Activated CD8-positive, alpha-beta T cell treated with anti-CD3 and anti-CD28 coated beads, Interleukin-2, amount 10 ng/mL, durations not matched to agents 7 days and 5 days (primary cell): ENCODE measurements at regions of chr7 and their contacts with region 1.

Region 1: DNA sequence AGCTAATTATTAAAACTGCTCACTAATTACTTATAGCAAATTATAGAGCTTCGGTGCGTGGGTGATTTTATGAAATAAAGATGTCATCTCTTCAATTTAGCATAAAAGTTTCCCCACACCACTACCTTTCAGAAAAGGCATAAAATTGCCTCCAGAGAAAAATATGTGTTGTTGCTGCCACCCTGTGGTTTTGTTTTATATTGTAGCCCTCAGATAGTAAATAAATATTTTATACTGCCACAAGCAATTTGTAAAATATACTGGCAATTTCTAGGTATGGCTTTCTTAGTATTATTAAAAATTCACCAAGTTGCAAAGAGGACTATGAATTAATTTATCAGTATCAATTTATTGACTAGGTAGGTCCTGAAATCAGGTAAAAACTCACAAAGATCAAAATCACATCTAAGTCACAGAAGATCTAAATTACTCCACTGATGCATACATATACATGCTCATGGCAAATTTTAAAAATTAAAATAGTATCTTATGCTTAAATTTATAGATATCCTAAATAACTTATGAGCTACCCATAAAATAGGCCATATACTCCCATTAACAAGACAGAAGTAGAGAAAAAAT is 26.5 kb downstream of the ASNS start:
- DNase-seq: peak; percentile 34
- ATAC-seq: no peak
- H3K4me3 Mint-ChIP-seq: no peak overlapping the region
- H3K27ac Mint-ChIP-seq: no peak overlapping the region
- H3K4me1 Mint-ChIP-seq: no peaks in the 10 kb centered on the region
- H3K27me3 Mint-ChIP-seq: peaks cover 7% of the 10 kb centered on the region

Region 2: DNA sequence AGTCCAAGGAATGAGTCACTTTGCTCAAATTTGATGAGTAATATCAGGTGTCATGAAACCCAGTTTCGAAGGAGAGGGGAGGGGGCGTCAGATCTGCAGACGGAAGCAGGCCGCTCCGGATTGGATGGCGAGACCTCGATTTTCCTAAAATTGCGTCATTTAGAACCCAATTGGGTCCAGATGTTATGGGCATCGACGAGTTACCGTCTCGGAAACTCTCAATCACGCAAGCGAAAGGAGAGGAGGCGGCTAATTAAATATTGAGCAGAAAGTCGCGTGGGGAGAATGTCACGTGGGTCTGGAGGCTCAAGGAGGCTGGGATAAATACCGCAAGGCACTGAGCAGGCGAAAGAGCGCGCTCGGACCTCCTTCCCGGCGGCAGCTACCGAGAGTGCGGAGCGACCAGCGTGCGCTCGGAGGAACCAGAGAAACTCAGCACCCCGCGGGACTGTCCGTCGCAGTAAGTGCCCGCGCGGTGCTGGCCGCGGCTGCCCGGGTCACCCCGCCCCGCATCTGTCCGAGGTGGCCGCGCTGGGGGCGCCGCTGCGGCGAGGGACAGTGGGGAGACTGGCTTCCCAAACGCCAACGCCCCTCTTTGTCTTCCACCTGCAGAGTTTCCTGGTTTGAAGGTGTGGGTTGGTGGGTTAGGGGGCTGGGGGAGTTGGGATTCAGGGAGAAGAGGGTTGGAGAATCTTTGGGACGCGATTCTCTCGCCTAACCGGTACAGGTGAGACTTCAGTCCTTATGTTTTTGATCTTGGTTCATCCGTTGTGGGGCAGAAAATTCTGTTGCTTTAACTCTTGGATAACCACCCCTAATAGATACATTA is 113.8 kb before region 1 on chr7 and contains the start of gene TAC1:
- CTCF ChIA-PET with region 1: no interaction called
- POLR2A ChIA-PET with region 1: no interaction called
- DNase-seq: no peak
- ATAC-seq: no peak
- H3K4me3 Mint-ChIP-seq: no peak within 1 kb of the TSS
- H3K27ac Mint-ChIP-seq: no peak within 1 kb of the TSS
- H3K4me1 Mint-ChIP-seq: peaks cover 14% of the 10 kb centered on the region
- H3K27me3 Mint-ChIP-seq: peaks cover 55% of the 10 kb centered on the region
- total RNA-seq, gene TAC1: not detected

Region 3: DNA sequence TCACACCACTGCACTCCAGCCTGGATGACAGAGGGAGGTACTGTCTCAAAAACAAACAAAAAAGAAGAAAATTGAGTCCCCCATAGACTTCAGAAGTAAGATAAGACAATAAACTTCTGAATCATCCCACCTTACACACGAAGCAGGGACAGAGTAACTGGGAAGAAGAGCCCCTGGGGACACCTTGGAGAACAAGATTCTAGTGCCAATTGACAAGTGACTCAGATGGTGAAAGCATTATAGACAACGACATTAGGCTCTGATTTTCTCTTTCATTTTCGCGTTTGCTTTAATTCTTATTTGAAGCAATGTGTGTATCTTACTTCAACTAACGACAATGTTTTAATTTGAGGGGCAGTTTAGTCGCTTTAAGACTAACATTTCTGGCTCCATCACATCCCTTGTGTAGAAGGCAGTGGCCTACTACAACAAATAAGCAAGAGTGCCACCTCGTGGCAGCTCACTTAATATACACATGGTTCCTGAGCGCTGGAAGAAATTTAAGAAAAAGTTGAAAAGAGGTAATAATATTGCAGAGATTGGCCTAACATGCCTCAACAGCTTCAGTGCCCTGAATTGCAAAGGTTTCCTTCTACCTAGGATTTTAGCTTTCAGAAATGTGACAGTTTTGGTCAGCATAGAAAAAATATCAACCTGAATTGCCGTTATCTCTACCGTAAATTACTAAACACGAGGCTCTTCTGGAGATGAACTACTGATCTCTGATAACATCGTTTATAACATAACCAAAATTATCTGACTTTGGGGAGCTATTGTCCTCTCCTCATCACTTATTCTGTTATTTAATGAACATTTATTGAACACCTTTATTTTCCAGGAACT is 10.2 kb before region 1 on chr7:
- CTCF ChIA-PET with region 1: interaction called, 42 read pairs
- POLR2A ChIA-PET with region 1: no interaction called
- DNase-seq: peak; percentile 71
- ATAC-seq: peak; percentile 74
- H3K4me3 Mint-ChIP-seq: no peak overlapping the region
- H3K27ac Mint-ChIP-seq: no peak overlapping the region
- H3K4me1 Mint-ChIP-seq: no peaks in the 10 kb centered on the region
- H3K27me3 Mint-ChIP-seq: peaks cover 29% of the 10 kb centered on the region